Heart left ventricle (tissue), 16 donors: ENCODE measurements at regions of chr6 and their contacts with region 1.

Region 1: GRCh38 chr6:144447472-144447871 is 162.3 kb downstream of the UTRN start:
- DNase-seq: no peak
- ATAC-seq: no peak
- H3K4me3 ChIP-seq: no peak overlapping the region
- H3K27ac ChIP-seq: no peak overlapping the region
- H3K4me1 ChIP-seq: peaks cover 0 to 10% (median 5%) of the 10 kb centered on the region in 12 donors
- H3K27me3 ChIP-seq: no peaks in the 10 kb centered on the region
- CTCF ChIP-seq: no peak
- POLR2A ChIP-seq: no peak

Region 2: GRCh38 chr6:144411332-144412190 is 35.9 kb before region 1 on chr6:
- intact Hi-C with region 1: no loop called
- DNase-seq: no peak
- ATAC-seq: no peak
- H3K4me3 ChIP-seq: no peak overlapping the region
- H3K27ac ChIP-seq: no peak overlapping the region
- H3K4me1 ChIP-seq: peaks cover 0 to 57% (median 41%) of the 10 kb centered on the region in 12 donors
- H3K27me3 ChIP-seq: no peaks in the 10 kb centered on the region
- CTCF ChIP-seq: no peak
- POLR2A ChIP-seq: no peak

Region 3: GRCh38 chr6:144482142-144482541 is 34.7 kb after region 1 on chr6:
- intact Hi-C with region 1: loop called in 1 of 10 experiments (anchors 5 kb)
- DNase-seq: peak; percentile 69 to 77 (median 72)
- ATAC-seq: peak in 2 of 4 donors; percentile 23 to 41
- H3K4me3 ChIP-seq: no peak overlapping the region
- H3K27ac ChIP-seq: no peak overlapping the region
- H3K4me1 ChIP-seq: peaks cover 0 to 38% (median 21%) of the 10 kb centered on the region in 12 donors
- H3K27me3 ChIP-seq: no peaks in the 10 kb centered on the region
- CTCF ChIP-seq: peak; percentile 50 to 80 (median 66)
- POLR2A ChIP-seq: no peak